Colonic mucosa (tissue), 4 donors: ENCODE measurements at regions of chr12 and their contacts with region 1.

Region 1: GRCh38 chr12:94545935-94546771 is 86.5 kb upstream of the CEP83 start:
- DNase-seq: peak; percentile 60
- H3K4me3 ChIP-seq: no peak overlapping the region
- H3K27ac ChIP-seq: no peak overlapping the region
- H3K4me1 ChIP-seq: no peaks in the 10 kb centered on the region
- H3K27me3 ChIP-seq: no peaks in the 10 kb centered on the region
- CTCF ChIP-seq: peak; percentile 82

Region 2: GRCh38 chr12:94762259-94762942 is 216.2 kb after region 1 on chr12:
- intact Hi-C with region 1: loop called (anchors 10 kb)
- DNase-seq: no peak
- H3K4me3 ChIP-seq: no peak overlapping the region
- H3K27ac ChIP-seq: peak overlapping the region; percentile 45
- H3K4me1 ChIP-seq: no peaks in the 10 kb centered on the region
- H3K27me3 ChIP-seq: no peaks in the 10 kb centered on the region
- CTCF ChIP-seq: no peak

Region 3: DNA sequence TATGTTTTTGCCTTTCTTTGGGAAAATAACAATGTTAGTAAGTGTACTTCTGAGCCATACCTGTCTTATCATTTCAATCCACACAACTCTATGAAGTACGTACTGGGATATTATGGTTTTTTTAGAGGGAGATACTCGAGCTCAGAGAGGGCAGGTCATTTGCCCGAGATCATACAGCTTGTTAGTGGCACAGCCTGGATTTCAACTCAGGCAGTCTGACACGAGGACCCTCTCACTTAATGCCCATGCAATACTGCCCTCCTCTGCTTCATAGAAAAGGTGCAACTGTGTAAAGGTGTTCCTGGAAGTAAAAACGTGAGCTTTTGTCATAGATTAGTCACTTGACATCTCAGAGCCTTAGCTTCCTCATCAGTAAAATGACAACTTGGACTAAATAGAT is 329.4 kb after region 1 on chr12:
- intact Hi-C with region 1: loop called (anchors 10 kb)
- DNase-seq: no peak
- H3K4me3 ChIP-seq: no peak overlapping the region
- H3K27ac ChIP-seq: no peak overlapping the region
- H3K4me1 ChIP-seq: no peaks in the 10 kb centered on the region
- H3K27me3 ChIP-seq: peaks cover 46% of the 10 kb centered on the region
- CTCF ChIP-seq: peak; percentile 28